ENCODE measurements at regions of chr21 and their contacts with region 1.

Region 1: GRCh38 chr21:38773099-38774061 is 32.3 kb upstream of the ETS2 start:
- DNase-seq: peak; percentile 95
- ATAC-seq: peak; percentile 97
- H3K4me3 ChIP-seq: no peak overlapping the region
- H3K27ac ChIP-seq: peak overlapping the region; percentile 90
- H3K4me1 ChIP-seq: peaks cover 30% of the 10 kb centered on the region
- H3K27me3 ChIP-seq: no peaks in the 10 kb centered on the region
- CTCF ChIP-seq: no peak

Region 2: GRCh38 chr21:38755681-38756371 is 17.6 kb before region 1 on chr21:
- CTCF ChIA-PET with region 1: no interaction called
- POLR2A ChIA-PET with region 1: no interaction called
- intact Hi-C with region 1: loop called (anchors 2 kb)
- DNase-seq: peak; percentile 88
- ATAC-seq: peak; percentile 79
- H3K4me3 ChIP-seq: no peak overlapping the region
- H3K27ac ChIP-seq: peak overlapping the region; percentile 47
- H3K4me1 ChIP-seq: peaks cover 34% of the 10 kb centered on the region
- H3K27me3 ChIP-seq: no peaks in the 10 kb centered on the region
- CTCF ChIP-seq: no peak

Region 3: DNA sequence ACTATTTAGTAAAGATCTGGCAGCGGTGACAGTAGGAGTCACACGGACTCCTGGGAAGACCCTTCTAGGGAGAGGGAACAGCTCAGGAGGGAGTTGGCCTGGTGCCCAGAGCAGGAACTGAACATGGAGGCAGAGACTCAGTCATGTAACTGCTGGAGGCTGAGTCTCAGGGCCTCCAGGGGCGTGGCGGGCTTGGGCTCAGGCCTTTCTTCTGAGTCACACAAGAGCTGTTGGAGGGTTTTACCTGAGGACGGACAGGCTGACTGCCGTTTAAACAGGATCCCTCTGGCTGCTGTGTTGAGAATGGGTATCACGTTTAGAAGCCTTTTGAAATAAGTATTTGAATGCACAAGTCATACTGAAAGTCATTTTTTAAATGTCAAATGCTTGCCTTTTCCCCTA is 25.1 kb after region 1 on chr21:
- CTCF ChIA-PET with region 1: no interaction called
- POLR2A ChIA-PET with region 1: no interaction called
- intact Hi-C with region 1: loop called (anchors 2 kb)
- DNase-seq: peak; percentile 96
- ATAC-seq: peak; percentile 51
- H3K4me3 ChIP-seq: no peak overlapping the region
- H3K27ac ChIP-seq: peak overlapping the region; percentile 95
- H3K4me1 ChIP-seq: peaks cover 81% of the 10 kb centered on the region
- H3K27me3 ChIP-seq: no peaks in the 10 kb centered on the region
- CTCF ChIP-seq: no peak